Ascending aorta (tissue), 2 donors: ENCODE measurements at regions of chr19 and their contacts with region 1.

Region 1: GRCh38 chr19:662962-663681 is at the start of gene RNF126:
- DNase-seq: peak; percentile 66 to 96
- H3K4me3 ChIP-seq: peak within 1 kb of the TSS; percentile 88 to 99
- H3K27ac ChIP-seq: peak within 1 kb of the TSS; percentile 91 to 92
- H3K4me1 ChIP-seq: peaks cover 16 to 36% of the 10 kb centered on the region in 2 donors
- H3K27me3 ChIP-seq: no peaks in the 10 kb centered on the region
- CTCF ChIP-seq: no peak
- total RNA-seq, gene RNF126: 39.0 TPM

Region 2: DNA sequence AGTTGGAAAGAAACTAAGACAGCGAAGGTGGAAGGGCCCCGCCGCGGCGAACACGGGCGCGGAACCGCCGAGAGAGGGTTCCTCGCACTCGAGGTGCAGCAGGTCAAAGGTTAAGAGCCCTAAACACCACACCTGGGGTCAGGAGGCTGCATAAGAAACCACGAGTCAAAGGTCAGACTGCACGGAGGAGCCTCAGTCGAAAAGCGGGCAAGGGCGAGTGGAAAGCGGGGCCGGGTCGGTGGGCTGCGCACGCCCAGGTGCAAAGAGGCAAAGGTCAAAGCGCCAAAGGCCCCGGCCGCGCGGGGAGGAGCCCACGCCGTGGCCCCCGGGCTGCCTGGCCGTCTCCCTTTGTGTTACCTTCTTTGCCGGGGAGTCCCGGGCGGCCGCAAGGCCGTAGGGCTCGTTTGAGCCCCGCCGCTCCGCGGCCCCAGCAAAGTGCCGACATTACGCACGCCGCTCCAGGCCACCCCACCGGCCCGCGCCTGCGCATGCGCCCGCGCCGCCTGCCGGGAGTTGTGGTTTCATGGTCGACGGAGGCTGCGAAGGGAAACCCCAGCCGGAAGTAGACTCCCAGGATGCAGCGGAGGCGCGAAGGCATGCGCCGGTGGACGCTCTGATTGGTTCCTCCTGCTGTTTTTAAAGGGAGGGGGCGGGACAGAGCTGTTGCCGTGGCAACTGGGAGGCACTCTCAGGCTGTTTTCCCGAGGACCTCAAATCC is 29.9 kb before region 1 on chr19 and contains the start of gene POLRMT:
- intact Hi-C with region 1: loop called (anchors 1 kb)
- DNase-seq: peak; percentile 94 to 99
- H3K4me3 ChIP-seq: peak within 1 kb of the TSS; percentile 56 to 97
- H3K27ac ChIP-seq: peak within 1 kb of the TSS; percentile 53 to 72
- H3K4me1 ChIP-seq: peaks cover 10 to 20% of the 10 kb centered on the region in 2 donors
- H3K27me3 ChIP-seq: no peaks in the 10 kb centered on the region
- CTCF ChIP-seq: no peak
- total RNA-seq, gene POLRMT: 26.8 TPM

Region 3: GRCh38 chr19:639253-640160 is 23.6 kb before region 1 on chr19 and contains the start of gene FGF22:
- intact Hi-C with region 1: loop called (anchors 2 kb)
- DNase-seq: peak; percentile 72 to 96
- H3K4me3 ChIP-seq: peak within 1 kb of the TSS; percentile 62 to 82
- H3K27ac ChIP-seq: peak within 1 kb of the TSS; percentile 63 to 79
- H3K4me1 ChIP-seq: peaks cover 6 to 18% of the 10 kb centered on the region in 2 donors
- H3K27me3 ChIP-seq: no peaks in the 10 kb centered on the region
- CTCF ChIP-seq: no peak
- total RNA-seq, gene FGF22: not detected

Region 4: DNA sequence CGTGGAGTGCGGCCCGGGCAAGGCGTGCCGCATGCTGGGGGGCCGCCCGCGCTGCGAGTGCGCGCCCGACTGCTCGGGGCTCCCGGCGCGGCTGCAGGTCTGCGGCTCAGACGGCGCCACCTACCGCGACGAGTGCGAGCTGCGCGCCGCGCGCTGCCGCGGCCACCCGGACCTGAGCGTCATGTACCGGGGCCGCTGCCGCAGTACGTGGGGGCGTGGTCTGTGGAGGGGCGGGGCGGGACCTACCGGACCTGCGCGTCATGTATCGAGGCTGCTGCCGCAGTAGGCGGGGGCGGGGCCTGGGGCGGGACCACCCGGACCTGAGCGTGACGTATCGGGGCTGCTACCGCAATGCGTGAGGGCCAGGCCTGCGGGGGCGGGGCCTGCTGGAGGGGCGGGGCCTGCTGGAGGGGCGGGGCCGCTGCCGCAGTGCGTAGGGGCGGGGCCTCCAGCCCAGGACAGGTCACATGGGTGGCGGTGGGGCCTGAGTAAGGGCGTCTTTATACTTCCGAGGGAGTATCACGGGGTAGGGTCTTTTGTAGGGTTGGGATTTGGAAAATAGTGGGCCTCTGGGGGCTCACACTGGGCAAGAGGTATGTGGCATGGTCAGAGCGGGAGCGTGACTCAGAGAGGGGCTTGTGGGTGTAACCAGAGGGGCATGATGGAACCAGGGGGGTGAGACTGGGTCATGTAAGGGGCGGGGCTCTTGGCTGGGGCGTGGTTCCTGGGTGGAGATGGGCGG is 17.3 kb after region 1 on chr19:
- intact Hi-C with region 1: loop called (anchors 1 kb)
- DNase-seq: peak; percentile 98 to 100
- H3K4me3 ChIP-seq: peak overlapping the region; percentile 88 to 93
- H3K27ac ChIP-seq: peak overlapping the region; percentile 97 to 98
- H3K4me1 ChIP-seq: peaks cover 9 to 21% of the 10 kb centered on the region in 2 donors
- H3K27me3 ChIP-seq: no peaks in the 10 kb centered on the region
- CTCF ChIP-seq: peak; percentile 21 to 76 (median 35)

Region 5: GRCh38 chr19:732148-733069 is 69.3 kb after region 1 on chr19:
- intact Hi-C with region 1: loop called (anchors 1 kb)
- DNase-seq: no peak
- H3K4me3 ChIP-seq: no peak overlapping the region
- H3K27ac ChIP-seq: no peak overlapping the region
- H3K4me1 ChIP-seq: no peaks in the 10 kb centered on the region
- H3K27me3 ChIP-seq: no peaks in the 10 kb centered on the region
- CTCF ChIP-seq: no peak

Region 6: DNA sequence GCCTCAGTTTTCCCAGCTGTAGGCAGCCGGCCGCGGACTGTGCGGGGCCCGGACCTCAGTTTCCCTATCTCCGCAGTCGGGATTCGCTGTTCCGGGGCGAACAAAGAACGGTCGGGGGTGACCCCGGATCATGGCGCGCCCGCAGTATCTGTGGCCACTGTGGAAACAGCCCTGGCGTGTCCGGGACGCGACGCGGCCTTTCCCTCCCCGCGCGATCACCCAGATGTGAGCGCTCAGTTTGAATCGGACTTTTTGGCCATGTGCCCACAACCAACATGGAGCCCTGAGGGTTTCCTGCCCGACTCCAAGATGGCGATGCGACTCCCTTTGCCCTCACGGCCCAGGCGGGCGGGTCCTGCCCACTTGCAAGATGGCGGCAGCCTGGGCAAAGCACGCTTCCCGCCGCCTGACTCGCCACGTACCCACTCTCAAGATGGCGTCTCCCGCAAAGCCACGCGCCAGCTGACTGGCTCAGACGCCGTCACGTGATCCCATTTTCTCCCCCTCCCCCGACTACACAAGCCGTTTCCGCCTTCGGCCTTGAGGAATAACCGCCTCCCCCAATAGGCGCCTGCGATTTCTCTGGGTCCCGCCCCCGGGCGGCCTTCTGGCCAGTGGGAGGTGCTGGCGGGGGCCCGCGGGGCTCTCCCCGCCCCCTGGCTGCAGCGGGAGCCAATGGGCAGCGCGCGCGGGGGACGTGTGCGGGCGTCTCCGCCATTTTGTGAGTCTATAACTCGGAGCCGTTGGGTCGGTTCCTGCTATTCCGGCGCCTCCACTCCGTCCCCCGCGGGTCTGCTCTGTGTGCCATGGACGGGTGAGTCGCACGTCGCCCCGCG is 133.8 kb after region 1 on chr19 and contains the start of gene PTBP1:
- intact Hi-C with region 1: loop called (anchors 1 kb)
- DNase-seq: peak; percentile 100
- H3K4me3 ChIP-seq: peak within 1 kb of the TSS; percentile 96 to 98
- H3K27ac ChIP-seq: peak within 1 kb of the TSS; percentile 84 to 99
- H3K4me1 ChIP-seq: peaks cover 34 to 46% of the 10 kb centered on the region in 2 donors
- H3K27me3 ChIP-seq: no peaks in the 10 kb centered on the region
- CTCF ChIP-seq: no peak
- total RNA-seq, gene PTBP1: 210 TPM

Region 7: GRCh38 chr19:920051-920864 is 257.1 kb after region 1 on chr19:
- intact Hi-C with region 1: loop called (anchors 2 kb)
- DNase-seq: no peak
- H3K4me3 ChIP-seq: peak overlapping the region; percentile 40 to 43
- H3K27ac ChIP-seq: no peak overlapping the region
- H3K4me1 ChIP-seq: peaks cover 12 to 37% of the 10 kb centered on the region in 2 donors
- H3K27me3 ChIP-seq: peaks cover 17% of the 10 kb centered on the region
- CTCF ChIP-seq: no peak